Activated CD8-positive, alpha-beta T cell treated with anti-CD3 and anti-CD28 coated beads for 36 hours (primary cell): ENCODE measurements at regions of chr13 and their contacts with region 1.

Region 1: GRCh38 chr13:42392716-42393572 is 121.0 kb downstream of the AKAP11 start:
- DNase-seq: peak; percentile 58
- ATAC-seq: peak; percentile 55
- H3K4me3 Mint-ChIP-seq: peak overlapping the region; percentile 78
- H3K27ac Mint-ChIP-seq: peak overlapping the region; percentile 99
- H3K4me1 Mint-ChIP-seq: peaks cover 74% of the 10 kb centered on the region
- H3K27me3 Mint-ChIP-seq: no peaks in the 10 kb centered on the region
- CTCF ChIP-seq: no peak

Region 2: DNA sequence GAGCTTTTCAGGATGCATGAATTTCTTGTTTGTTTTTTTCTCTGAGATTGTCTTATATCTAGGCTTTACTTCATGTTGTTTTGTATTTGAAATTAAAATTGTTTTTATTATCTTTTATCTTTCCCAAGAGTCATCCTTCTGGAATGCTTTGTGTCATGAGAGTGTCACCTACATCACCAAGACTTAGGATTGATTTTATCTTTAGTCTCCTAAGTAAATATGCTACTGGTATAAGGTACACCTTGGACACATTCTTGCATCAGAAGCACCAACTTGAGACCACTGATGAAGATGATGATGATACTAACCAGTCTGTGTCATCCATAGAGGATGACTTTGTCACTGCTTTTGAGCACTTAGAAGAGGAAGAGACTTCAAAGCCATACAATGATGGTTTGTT is 94.5 kb before region 1 on chr13:
- CTCF ChIA-PET with region 1: no interaction called
- POLR2A ChIA-PET with region 1: no interaction called
- intact Hi-C with region 1: no loop called
- DNase-seq: no peak
- ATAC-seq: no peak
- H3K4me3 Mint-ChIP-seq: no peak overlapping the region
- H3K27ac Mint-ChIP-seq: no peak overlapping the region
- H3K4me1 Mint-ChIP-seq: peaks cover 14% of the 10 kb centered on the region
- H3K27me3 Mint-ChIP-seq: no peaks in the 10 kb centered on the region
- CTCF ChIP-seq: no peak

Region 3: DNA sequence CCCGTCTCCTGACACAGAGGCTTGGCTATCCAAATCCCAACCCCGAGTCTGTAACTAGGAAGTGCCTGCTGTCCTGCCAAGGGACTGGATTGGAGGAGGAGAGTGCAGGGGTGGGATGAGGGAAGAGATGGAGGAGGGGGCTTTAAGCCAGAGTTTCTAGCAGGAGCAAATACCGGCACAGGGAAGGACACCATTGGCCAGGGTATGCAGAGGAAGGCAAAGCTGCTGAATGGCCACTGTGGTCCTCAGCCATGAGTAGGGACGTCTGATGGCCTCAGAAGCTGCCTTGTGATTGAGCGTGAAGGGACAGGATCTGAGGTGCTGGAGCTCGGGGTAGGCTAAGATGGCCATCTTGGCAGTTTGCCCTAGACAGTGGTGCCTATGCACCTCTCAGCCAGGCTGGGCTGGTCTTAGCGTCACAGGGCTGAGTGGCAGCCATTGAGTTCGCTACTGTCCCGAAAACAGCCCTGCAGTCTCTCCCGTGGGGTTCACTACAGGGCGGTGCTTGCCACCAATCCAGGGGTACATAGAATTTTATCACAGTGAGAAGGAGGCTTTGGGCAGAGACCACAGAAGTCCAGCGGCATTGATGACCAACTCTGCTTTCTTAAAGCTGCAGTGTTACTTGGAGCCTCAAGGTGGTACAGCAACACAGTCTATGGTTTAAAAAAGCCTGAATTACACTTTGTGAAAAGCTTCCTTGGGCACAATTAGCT is 59.2 kb before region 1 on chr13:
- CTCF ChIA-PET with region 1: interaction called, 5 read pairs
- POLR2A ChIA-PET with region 1: interaction called, 6 read pairs
- intact Hi-C with region 1: loop called (anchors 10 kb)
- DNase-seq: no peak
- ATAC-seq: peak; percentile 77
- H3K4me3 Mint-ChIP-seq: no peak overlapping the region
- H3K27ac Mint-ChIP-seq: peak overlapping the region; percentile 53
- H3K4me1 Mint-ChIP-seq: peaks cover 60% of the 10 kb centered on the region
- H3K27me3 Mint-ChIP-seq: no peaks in the 10 kb centered on the region
- CTCF ChIP-seq: peak; percentile 64

Region 4: DNA sequence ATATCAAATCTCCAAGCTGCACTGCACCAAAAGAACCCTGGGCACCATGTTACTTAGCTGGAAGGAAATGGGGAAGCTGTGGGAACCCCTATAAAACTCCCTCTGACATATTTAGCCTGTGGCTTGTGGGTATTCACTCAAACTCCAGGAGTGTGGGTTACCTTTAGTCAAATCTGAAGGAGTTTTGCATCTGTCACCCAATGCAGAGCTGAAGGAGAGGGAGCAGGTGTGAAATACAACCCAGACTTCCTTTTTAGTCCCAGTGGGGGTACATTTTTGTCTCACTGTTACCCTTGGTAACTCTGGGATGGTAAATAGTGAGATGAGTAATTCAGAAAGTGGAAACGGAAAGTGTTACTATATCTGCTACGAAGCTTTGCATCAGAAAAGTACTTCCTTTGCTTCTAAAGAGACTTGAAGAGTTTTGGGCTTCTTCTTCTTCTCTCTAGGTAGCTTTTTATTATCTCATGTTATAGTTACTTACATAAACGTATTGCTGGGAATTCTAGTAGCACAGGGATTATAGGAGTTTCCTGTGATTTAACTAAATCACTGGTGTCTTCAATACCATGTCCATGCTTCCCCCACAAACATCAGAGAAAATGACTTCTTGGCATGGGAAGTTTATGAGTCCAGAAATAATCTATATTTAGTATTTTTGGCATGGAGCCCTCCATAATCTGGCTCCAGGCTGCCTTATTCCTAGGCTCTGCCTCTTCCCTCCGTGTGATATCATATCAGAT is 15.1 kb before region 1 on chr13:
- CTCF ChIA-PET with region 1: interaction called, 29 read pairs
- POLR2A ChIA-PET with region 1: interaction called, 192 read pairs
- intact Hi-C with region 1: loop called (anchors 1 kb)
- DNase-seq: peak; percentile 58
- ATAC-seq: peak; percentile 82
- H3K4me3 Mint-ChIP-seq: no peak overlapping the region
- H3K27ac Mint-ChIP-seq: peak overlapping the region; percentile 95
- H3K4me1 Mint-ChIP-seq: peaks cover 69% of the 10 kb centered on the region
- H3K27me3 Mint-ChIP-seq: no peaks in the 10 kb centered on the region
- CTCF ChIP-seq: no peak

Region 5: DNA sequence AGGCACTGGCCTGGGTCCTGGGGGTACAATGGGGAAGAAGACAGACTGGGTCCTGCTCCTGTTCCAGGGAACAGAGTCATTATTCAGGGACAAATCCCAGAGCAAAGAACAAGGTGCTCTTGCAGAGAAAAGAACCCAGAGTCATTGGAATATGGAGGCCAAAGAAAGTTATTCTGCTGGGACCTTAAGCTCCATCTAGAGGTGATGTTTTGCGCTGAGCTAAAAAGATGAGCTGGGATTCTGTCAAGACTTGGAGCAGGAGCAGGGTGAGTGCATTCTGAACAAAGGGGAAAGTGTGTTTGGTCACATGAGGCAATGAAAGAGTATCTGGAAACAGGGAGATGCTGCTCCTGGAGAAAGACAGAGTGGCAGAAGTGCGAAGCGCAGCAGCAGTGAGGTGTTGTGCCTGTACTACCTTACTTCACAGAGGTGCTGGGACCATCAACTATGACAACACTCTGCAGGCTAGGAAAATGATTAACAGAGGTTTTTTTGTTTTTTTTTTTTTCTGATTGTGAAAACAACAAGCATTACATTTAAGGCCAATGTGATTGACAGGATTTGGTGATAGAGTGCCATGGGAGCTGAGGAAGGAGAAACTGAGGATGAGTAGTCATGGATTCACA is 85.7 kb after region 1 on chr13:
- CTCF ChIA-PET with region 1: interaction called, 6 read pairs
- POLR2A ChIA-PET with region 1: interaction called, 4 read pairs
- intact Hi-C with region 1: loop called (anchors 5 kb)
- DNase-seq: no peak
- ATAC-seq: no peak
- H3K4me3 Mint-ChIP-seq: no peak overlapping the region
- H3K27ac Mint-ChIP-seq: no peak overlapping the region
- H3K4me1 Mint-ChIP-seq: peaks cover 24% of the 10 kb centered on the region
- H3K27me3 Mint-ChIP-seq: no peaks in the 10 kb centered on the region
- CTCF ChIP-seq: peak; percentile 27

Region 6: DNA sequence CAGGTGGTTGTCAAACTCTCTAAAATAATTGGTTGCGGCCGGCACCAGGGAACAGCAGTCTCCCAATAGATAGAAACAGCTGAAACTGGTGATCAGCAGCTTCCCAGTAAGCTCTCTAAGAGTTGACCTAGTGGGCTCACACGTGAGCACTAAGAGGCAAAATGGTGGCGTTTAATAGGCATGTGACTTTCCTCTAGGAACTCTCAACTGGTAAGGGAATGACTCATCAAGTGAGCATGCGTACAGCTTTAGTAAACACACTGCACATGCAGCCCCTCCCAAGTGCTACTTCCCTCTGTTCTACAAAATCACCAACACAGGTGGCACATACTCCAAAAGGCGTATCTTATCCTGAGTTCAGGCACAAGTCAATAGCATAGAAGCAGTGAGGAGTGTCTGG is 222.7 kb after region 1 on chr13:
- CTCF ChIA-PET with region 1: no interaction called
- POLR2A ChIA-PET with region 1: no interaction called
- intact Hi-C with region 1: no loop called
- DNase-seq: no peak
- ATAC-seq: no peak
- H3K4me3 Mint-ChIP-seq: no peak overlapping the region
- H3K27ac Mint-ChIP-seq: no peak overlapping the region
- H3K4me1 Mint-ChIP-seq: no peaks in the 10 kb centered on the region
- H3K27me3 Mint-ChIP-seq: peaks cover 3% of the 10 kb centered on the region
- CTCF ChIP-seq: no peak